ENCODE measurements at regions of chr19 and their contacts with region 1.

Region 1: DNA sequence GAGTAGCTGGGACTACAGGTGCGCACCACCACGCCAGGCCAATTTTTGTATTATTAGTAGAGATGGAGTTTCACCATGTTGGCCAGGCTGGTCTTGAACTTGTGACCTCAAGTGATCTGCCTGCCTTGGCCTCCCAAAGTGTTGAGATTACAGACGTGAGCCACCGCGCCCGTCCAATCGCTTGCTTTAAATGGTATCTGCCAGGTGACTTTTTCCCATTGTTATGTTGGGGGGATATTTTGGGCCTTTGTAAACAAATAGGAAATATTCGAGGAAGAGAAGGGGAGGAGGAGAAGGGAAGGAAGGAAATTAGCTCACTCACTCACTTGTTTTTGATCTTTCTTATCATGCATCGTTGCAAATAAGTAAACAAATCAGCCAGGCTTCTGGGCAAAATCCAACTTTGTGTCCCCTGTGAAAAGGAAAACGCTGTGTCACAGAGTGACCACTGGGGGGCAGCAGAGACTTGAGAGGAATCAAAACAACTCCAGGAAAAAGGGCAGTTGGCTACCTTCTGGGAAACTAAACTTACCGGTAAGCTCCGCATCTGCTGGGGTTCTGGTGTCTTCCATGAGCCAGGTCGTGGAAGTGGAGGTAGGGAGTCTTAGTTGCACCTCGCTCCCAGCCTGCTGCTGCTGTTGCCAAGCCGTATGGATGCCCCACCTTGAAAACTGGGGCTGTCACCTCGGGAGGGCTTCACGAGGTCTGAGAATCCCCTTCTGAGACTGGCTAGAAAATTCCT is 9.3 kb upstream of the RANBP3 start:
- DNase-seq: peak in 1 of 2 donors; percentile 83
- ATAC-seq: peak in 7 of 8 donors; percentile 32 to 74 (median 54)
- H3K4me3 ChIP-seq: peak overlapping the region in 9 of 10 donors; percentile 8 to 52 (median 41)
- H3K27ac ChIP-seq: peak overlapping the region in 1 of 10 donors; percentile 28
- H3K4me1 ChIP-seq: peaks cover 0 to 27% (median 8%) of the 10 kb centered on the region in 9 donors
- H3K27me3 ChIP-seq: no peaks in the 10 kb centered on the region
- CTCF ChIP-seq: peak; percentile 89 to 97 (median 95)

Region 2: DNA sequence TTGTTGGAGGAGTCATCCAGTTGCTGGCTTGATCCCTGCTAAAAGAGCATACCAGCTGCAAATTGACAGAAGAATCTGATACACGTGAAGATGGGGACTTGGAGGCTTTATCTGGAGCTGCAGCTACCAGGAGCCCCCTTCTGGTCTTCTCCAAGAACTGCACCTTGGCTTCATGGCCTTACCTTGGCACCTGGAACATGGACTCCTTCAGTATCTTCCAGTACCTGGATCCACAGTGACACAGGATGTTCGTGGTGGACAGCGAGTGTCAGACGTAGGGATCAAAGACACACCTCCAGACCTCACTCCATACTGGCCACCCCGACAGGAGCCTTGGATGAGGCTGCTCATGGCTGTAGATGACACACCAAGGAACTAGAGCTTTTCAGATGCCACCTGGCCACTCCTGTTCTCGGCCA is 138.3 kb after region 1 on chr19:
- intact Hi-C with region 1: loop called in 2 of 10 experiments (anchors 2 to 10 kb)
- DNase-seq: peak in 1 of 2 donors; percentile 63
- ATAC-seq: peak; percentile 74 to 91 (median 86)
- H3K4me3 ChIP-seq: no peak overlapping the region
- H3K27ac ChIP-seq: no peak overlapping the region
- H3K4me1 ChIP-seq: no peaks in the 10 kb centered on the region
- H3K27me3 ChIP-seq: no peaks in the 10 kb centered on the region
- CTCF ChIP-seq: peak; percentile 85 to 98 (median 94)

Measured in heart right ventricle (tissue), 16 donors.